ENCODE measurements at regions of chr11 and their contacts with region 1.

Region 1: GRCh38 chr11:61021661-61022212 is 50.3 kb downstream of the CD6 start:
- DNase-seq: peak; percentile 73 to 96 (median 89)
- ATAC-seq: peak; percentile 74
- H3K4me3 ChIP-seq: peak overlapping the region in 1 of 2 experiments; percentile 38
- H3K4me3 Mint-ChIP-seq: peak overlapping the region; percentile 61
- H3K27ac ChIP-seq: peak overlapping the region; percentile 41 to 84
- H3K27ac Mint-ChIP-seq: peak overlapping the region; percentile 95
- H3K4me1 ChIP-seq: peaks cover 60% of the 10 kb centered on the region
- H3K4me1 Mint-ChIP-seq: peaks cover 69% of the 10 kb centered on the region
- H3K27me3 ChIP-seq: no peaks in the 10 kb centered on the region
- H3K27me3 Mint-ChIP-seq: no peaks in the 10 kb centered on the region
- CTCF ChIP-seq: no peak

Region 2: GRCh38 chr11:60841797-60842667 is 179.7 kb before region 1 on chr11 and contains the start of gene CCDC86:
- CTCF ChIA-PET with region 1: no interaction called
- POLR2A ChIA-PET with region 1: no interaction called
- intact Hi-C with region 1: loop called in 1 of 2 experiments (anchors 5 kb)
- DNase-seq: peak; percentile 97 to 100 (median 98)
- ATAC-seq: peak; percentile 97
- H3K4me3 ChIP-seq: peak within 1 kb of the TSS; percentile 84 to 93
- H3K4me3 Mint-ChIP-seq: peak within 1 kb of the TSS; percentile 93
- H3K27ac ChIP-seq: peak within 1 kb of the TSS; percentile 71 to 83
- H3K27ac Mint-ChIP-seq: peak within 1 kb of the TSS; percentile 97
- H3K4me1 ChIP-seq: peaks cover 35% of the 10 kb centered on the region
- H3K4me1 Mint-ChIP-seq: peaks cover 46% of the 10 kb centered on the region
- H3K27me3 ChIP-seq: no peaks in the 10 kb centered on the region
- H3K27me3 Mint-ChIP-seq: no peaks in the 10 kb centered on the region
- CTCF ChIP-seq: no peak
- total RNA-seq, gene CCDC86: 10.8 to 11.9 TPM

Region 3: GRCh38 chr11:60985991-60986915 is 35.5 kb before region 1 on chr11:
- CTCF ChIA-PET with region 1: interaction called, 3 read pairs
- POLR2A ChIA-PET with region 1: interaction called, 12 read pairs
- intact Hi-C with region 1: loop called (anchors 1 to 2 kb)
- DNase-seq: peak; percentile 81 to 99 (median 92)
- ATAC-seq: peak; percentile 86
- H3K4me3 ChIP-seq: peak overlapping the region; percentile 7 to 17
- H3K4me3 Mint-ChIP-seq: peak overlapping the region; percentile 68
- H3K27ac ChIP-seq: peak overlapping the region; percentile 72 to 86
- H3K27ac Mint-ChIP-seq: peak overlapping the region; percentile 96
- H3K4me1 ChIP-seq: peaks cover 83% of the 10 kb centered on the region
- H3K4me1 Mint-ChIP-seq: peaks cover 90% of the 10 kb centered on the region
- H3K27me3 ChIP-seq: no peaks in the 10 kb centered on the region
- H3K27me3 Mint-ChIP-seq: no peaks in the 10 kb centered on the region
- CTCF ChIP-seq: no peak

Region 4: GRCh38 chr11:61004180-61004611 is 17.5 kb before region 1 on chr11:
- CTCF ChIA-PET with region 1: no interaction called
- POLR2A ChIA-PET with region 1: interaction called, 3 read pairs
- intact Hi-C with region 1: loop called in 1 of 2 experiments (anchors 2 kb)
- DNase-seq: peak in 6 of 9 experiments; percentile 39 to 70 (median 58)
- ATAC-seq: peak; percentile 48
- H3K4me3 ChIP-seq: peak overlapping the region in 1 of 2 experiments; percentile 12
- H3K4me3 Mint-ChIP-seq: peak overlapping the region; percentile 72
- H3K27ac ChIP-seq: peak overlapping the region; percentile 22 to 62
- H3K27ac Mint-ChIP-seq: peak overlapping the region; percentile 92
- H3K4me1 ChIP-seq: peaks cover 68% of the 10 kb centered on the region
- H3K4me1 Mint-ChIP-seq: peaks cover 78% of the 10 kb centered on the region
- H3K27me3 ChIP-seq: no peaks in the 10 kb centered on the region
- H3K27me3 Mint-ChIP-seq: no peaks in the 10 kb centered on the region
- CTCF ChIP-seq: no peak

Region 5: DNA sequence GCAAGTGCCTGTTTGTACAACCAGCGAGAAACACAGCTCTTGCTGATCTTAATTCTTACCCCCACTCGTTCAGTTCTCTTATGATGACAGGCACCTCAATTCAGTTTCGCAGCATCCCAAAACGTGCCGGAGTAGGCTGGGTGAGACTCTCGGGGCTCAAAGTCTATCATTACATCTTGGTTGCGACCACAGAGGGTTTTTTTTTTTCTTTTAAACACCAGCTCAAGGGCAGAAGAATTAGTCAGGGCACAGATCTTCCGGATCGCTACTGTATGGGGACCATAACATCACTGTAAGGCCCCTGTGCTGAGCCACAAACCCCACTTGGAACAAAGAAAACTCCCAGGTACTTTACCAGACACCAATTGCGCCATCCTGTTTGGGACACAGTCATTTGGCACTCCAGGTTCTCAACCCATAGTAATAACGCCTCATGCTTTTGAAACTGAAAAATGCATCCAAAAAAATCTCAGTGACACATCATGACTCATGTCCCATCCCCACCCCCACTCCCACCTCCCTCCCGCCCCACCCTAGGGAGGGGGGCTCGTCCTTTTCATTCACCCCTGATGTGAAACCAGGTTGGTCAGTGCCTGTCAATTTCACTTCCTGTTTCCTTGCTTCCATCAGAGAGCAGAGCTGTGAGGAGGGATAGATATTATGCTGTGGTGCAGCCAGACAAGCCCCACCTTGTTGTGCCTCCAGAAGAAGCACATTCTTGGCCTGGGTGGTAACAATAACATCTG is 39.5 kb after region 1 on chr11:
- CTCF ChIA-PET with region 1: no interaction called
- POLR2A ChIA-PET with region 1: interaction called, 5 read pairs
- intact Hi-C with region 1: loop called (anchors 5 kb)
- DNase-seq: peak in 8 of 9 experiments; percentile 55 to 94 (median 70)
- ATAC-seq: peak; percentile 82
- H3K4me3 ChIP-seq: peak overlapping the region; percentile 8 to 16
- H3K4me3 Mint-ChIP-seq: peak overlapping the region; percentile 76
- H3K27ac ChIP-seq: peak overlapping the region; percentile 9 to 81
- H3K27ac Mint-ChIP-seq: peak overlapping the region; percentile 92
- H3K4me1 ChIP-seq: peaks cover 37% of the 10 kb centered on the region
- H3K4me1 Mint-ChIP-seq: peaks cover 57% of the 10 kb centered on the region
- H3K27me3 ChIP-seq: no peaks in the 10 kb centered on the region
- H3K27me3 Mint-ChIP-seq: no peaks in the 10 kb centered on the region
- CTCF ChIP-seq: no peak

Region 6: DNA sequence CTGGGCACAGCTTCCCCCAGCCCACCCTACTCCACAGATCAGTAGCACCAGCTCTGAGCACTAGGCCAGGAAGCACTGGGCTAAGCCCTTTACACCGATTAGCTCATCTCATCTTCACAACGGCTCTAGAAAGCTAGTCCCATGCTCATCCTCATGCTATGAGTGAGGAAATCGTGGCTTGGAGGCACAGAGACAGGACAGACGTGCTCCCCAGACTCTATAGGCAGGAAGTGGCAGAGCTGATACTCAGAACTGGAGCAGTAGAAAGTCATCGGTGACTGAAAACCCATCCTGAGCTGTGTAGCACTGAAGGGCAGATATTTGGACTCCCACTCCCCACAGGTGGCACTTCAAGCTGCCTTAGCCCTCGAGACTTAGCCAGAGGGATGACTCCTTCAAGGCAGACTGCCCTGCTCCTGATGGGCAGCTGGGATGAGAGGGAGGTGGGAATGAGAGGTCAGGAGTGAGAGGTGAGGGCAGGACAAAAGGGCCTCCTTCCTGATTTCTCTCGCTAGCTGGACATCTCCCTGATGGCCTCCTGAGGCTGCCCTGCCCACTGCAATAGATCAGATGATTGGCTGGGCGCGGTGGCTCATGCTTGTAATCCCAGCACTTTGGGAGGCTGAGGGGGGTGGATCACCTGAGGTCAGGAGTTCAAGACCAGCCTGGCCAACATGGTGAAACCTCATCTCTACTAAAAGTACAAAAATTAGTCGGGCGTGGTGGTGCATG is 90.2 kb after region 1 on chr11:
- CTCF ChIA-PET with region 1: interaction called, 4 read pairs
- POLR2A ChIA-PET with region 1: interaction called, 8 read pairs
- intact Hi-C with region 1: loop called in 1 of 2 experiments (anchors 5 kb)
- DNase-seq: peak in 6 of 9 experiments; percentile 48 to 83 (median 66)
- ATAC-seq: peak; percentile 79
- H3K4me3 ChIP-seq: no peak overlapping the region
- H3K4me3 Mint-ChIP-seq: peak overlapping the region; percentile 79
- H3K27ac ChIP-seq: peak overlapping the region; percentile 46 to 91
- H3K27ac Mint-ChIP-seq: peak overlapping the region; percentile 87
- H3K4me1 ChIP-seq: peaks cover 86% of the 10 kb centered on the region
- H3K4me1 Mint-ChIP-seq: peaks cover 91% of the 10 kb centered on the region
- H3K27me3 ChIP-seq: peaks cover 0 to 4% of the 10 kb centered on the region in 2 experiments
- H3K27me3 Mint-ChIP-seq: no peaks in the 10 kb centered on the region
- CTCF ChIP-seq: no peak

Region 7: DNA sequence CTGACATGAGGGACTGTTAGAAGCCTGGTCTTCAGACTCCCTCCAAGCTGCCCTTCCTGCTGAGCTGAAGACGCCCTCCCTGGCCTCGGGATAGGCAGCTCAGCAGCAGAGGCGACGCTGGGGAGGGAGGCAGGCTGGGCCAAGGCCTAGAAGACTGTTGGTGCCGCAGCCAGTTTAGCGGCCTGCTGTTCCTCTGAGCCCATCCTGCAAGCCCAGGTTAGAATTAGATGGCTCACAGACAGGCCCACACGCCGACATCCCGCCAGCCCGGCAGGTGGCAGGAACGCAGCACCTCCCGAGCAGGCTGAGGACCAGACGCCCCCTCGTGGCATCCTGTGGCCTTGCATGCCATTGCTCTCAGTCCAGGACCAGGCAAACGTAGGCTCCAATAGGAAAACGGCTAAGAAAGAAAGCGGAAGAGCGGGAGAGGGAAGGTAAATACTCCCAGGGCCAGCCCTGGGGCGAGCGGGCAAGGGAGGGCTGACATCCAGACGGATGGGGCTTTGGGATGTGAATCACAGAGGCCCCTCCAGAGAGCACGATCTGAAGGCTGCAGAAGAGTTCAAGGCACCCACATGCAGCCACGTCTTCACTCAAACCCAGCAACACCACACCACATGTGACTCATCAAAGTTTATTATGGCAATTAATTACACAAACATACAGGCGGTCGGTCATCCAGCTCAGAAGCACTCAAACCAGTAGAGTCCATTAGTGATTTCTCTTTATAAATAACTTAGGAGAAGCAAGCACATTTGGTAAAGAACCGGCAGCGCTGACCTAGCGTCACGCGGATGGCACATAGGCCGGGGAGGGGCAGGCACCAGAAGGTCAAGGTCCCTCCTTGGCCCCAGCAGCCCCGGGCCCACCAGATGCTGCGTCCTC is 108.1 kb after region 1 on chr11:
- CTCF ChIA-PET with region 1: interaction called, 5 read pairs
- POLR2A ChIA-PET with region 1: no interaction called
- intact Hi-C with region 1: loop called (anchors 2 to 5 kb)
- DNase-seq: peak; percentile 76 to 95 (median 91)
- ATAC-seq: peak; percentile 91
- H3K4me3 ChIP-seq: no peak overlapping the region
- H3K4me3 Mint-ChIP-seq: peak overlapping the region; percentile 46
- H3K27ac ChIP-seq: no peak overlapping the region
- H3K27ac Mint-ChIP-seq: peak overlapping the region; percentile 64
- H3K4me1 ChIP-seq: peaks cover 17% of the 10 kb centered on the region
- H3K4me1 Mint-ChIP-seq: peaks cover 21% of the 10 kb centered on the region
- H3K27me3 ChIP-seq: no peaks in the 10 kb centered on the region
- H3K27me3 Mint-ChIP-seq: no peaks in the 10 kb centered on the region
- CTCF ChIP-seq: peak; percentile 100